Gastrocnemius medialis (tissue), 4 donors: ENCODE measurements at regions of chr11 and their contacts with region 1.

Region 1: GRCh38 chr11:22130462-22131053 is 62.3 kb upstream of the ANO5 start:
- DNase-seq: no peak
- ATAC-seq: peak in 1 of 2 donors; percentile 69
- H3K4me3 ChIP-seq: no peak overlapping the region
- H3K27ac ChIP-seq: no peak overlapping the region
- H3K4me1 ChIP-seq: peaks cover 0 to 4% of the 10 kb centered on the region in 2 donors
- H3K27me3 ChIP-seq: no peaks in the 10 kb centered on the region
- CTCF ChIP-seq: peak in 4 of 5 experiments; percentile 42 to 66 (median 52)
- POLR2A ChIP-seq: no peak

Region 2: DNA sequence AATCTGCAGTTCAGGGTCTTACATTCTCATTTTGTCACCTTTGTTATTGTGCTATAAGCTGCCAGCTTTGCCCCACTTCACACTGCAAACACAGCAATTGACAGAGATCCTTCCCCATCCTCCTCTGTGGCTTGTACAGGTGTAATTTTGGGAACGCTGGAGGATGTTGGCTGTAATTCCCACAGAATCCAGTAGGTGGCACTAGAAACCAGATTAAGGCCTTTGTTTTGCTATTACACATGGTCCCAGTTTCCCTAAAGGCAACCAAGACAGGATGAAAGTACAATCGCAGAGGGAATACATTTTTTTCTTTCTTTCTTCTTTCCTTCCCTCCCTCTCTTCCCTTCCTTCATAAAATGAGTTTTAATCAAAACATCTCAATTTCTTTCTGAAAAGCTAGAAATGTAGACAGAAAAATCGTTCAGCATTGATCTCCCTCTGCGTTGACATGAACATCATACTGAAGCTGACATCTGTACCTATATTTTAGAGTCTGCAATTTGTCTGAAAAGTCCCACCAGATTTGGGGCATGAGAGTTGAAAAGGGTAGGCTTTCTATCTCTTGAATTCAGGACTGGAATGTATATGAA is 1482.5 kb before region 1 on chr11:
- in situ Hi-C with region 1: loop called in 3 of 4 experiments (anchors 25 kb)
- intact Hi-C with region 1: loop called (anchors 2 kb)
- DNase-seq: no peak
- ATAC-seq: peak; percentile 41 to 42
- H3K4me3 ChIP-seq: no peak overlapping the region
- H3K27ac ChIP-seq: no peak overlapping the region
- H3K4me1 ChIP-seq: no peaks in the 10 kb centered on the region
- H3K27me3 ChIP-seq: peaks cover 0 to 15% (median 3%) of the 10 kb centered on the region in 3 donors
- CTCF ChIP-seq: peak; percentile 53 to 83 (median 77)
- POLR2A ChIP-seq: no peak

Region 3: DNA sequence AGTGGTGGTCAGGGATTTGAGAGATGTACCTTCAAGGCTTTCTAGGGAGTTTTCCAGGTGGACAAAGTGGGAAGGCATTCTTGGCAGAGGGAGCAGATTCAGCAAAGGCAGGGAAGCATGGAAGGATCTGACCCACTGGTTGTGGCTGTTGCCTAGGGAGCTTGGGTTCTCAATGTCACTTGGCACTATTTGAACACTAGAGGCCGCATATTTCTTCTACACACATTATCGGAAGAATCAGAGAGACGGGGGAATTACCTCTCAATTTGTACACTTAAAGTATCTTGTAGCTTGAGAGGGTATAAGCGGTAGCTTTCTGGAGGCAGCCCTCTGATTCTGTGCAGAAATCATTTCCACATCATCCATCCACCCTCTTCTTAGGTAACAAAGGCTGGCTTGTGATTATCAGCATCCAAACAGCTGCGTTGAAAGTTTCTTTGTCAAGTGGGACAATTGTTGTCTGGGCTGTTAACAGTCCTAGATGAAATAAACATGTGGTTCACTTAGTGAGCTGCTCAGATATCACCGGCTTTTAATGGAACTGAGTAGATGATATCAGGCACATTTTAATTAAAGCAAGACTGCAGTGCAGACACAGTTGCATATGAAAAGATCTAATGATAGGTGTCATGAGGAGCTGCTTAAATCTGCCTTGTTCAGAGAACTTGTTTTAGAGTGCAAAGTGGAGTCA is 1458.6 kb before region 1 on chr11:
- in situ Hi-C with region 1: loop called in 1 of 4 experiments (anchors 10 kb)
- intact Hi-C with region 1: no loop called
- DNase-seq: no peak
- ATAC-seq: no peak
- H3K4me3 ChIP-seq: no peak overlapping the region
- H3K27ac ChIP-seq: no peak overlapping the region
- H3K4me1 ChIP-seq: peaks cover 0 to 9% of the 10 kb centered on the region in 2 donors
- H3K27me3 ChIP-seq: peaks cover 45 to 57% (median 52%) of the 10 kb centered on the region in 3 donors
- CTCF ChIP-seq: no peak
- POLR2A ChIP-seq: no peak

Region 4: DNA sequence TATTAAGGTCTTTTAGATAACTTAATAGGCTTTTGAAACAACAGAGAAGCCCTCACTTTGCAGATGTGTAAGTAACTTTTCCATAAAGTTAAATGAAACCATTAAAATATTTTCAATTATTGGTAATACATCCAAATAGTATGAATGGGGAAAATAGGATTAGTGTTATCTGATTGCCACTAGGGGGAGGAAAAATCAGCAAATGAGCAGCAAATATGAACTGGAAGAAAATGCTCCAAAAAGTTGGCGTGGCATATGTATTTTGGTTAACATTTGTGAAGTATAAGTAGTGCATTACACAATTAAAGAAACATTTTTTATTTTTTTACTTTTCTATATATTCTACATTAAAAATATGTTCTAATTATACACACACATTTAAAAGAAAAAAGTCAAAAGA is 197.5 kb before region 1 on chr11:
- in situ Hi-C with region 1: loop called in 1 of 4 experiments (anchors 5 kb)
- intact Hi-C with region 1: loop called (anchors 1 kb)
- DNase-seq: no peak
- ATAC-seq: no peak
- H3K4me3 ChIP-seq: no peak overlapping the region
- H3K27ac ChIP-seq: no peak overlapping the region
- H3K4me1 ChIP-seq: no peaks in the 10 kb centered on the region
- H3K27me3 ChIP-seq: no peaks in the 10 kb centered on the region
- CTCF ChIP-seq: peak in 2 of 5 experiments; percentile 36 to 50
- POLR2A ChIP-seq: no peak